ENCODE measurements at regions of chr19 and their contacts with region 1.

Region 1: DNA sequence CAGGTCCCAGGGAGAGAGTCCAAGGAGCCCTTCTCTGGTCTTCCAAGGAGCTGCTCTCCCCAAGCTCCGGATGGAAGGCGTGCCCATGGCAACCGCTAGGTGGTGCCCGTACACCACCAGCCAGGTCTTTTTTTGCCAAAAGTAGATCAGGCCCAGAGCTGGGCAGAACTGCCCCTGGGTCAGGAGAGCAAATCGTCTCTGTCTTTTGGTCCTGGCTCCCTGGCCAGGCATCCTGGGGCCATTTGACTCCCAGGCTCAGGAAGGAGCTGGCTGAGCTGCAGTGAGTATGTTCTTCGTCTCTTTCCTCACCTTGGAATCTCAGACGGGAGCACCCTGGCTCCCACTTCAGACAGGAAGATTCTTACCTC is 24.6 kb upstream of the BCL3 start:
- DNase-seq: peak; percentile 62 to 93
- H3K4me3 ChIP-seq: no peak overlapping the region
- H3K27ac ChIP-seq: no peak overlapping the region
- H3K4me1 ChIP-seq: peaks cover 0 to 6% (median 4%) of the 10 kb centered on the region in 4 experiments; a peak in 5 of 7 replicates
- H3K27me3 ChIP-seq: no peaks in the 10 kb centered on the region; a peak in 1 of 7 replicates
- CTCF ChIP-seq: peak; percentile 96 to 98 (median 97)
- EP300 ChIP-seq: no peak
- POLR2A ChIP-seq: no peak
- RAD21 ChIP-seq: peak; percentile 97 to 99

Region 2: GRCh38 chr19:44653977-44654774 is 69.8 kb before region 1 on chr19:
- CTCF ChIA-PET with region 1: interaction called, 14 read pairs
- POLR2A ChIA-PET with region 1: no interaction called
- DNase-seq: peak in 1 of 2 experiments; percentile 83
- H3K4me3 ChIP-seq: no peak overlapping the region
- H3K27ac ChIP-seq: no peak overlapping the region
- H3K4me1 ChIP-seq: peaks cover 0 to 2% (median 0%) of the 10 kb centered on the region in 4 experiments; a peak in 2 of 7 replicates
- H3K27me3 ChIP-seq: no peaks in the 10 kb centered on the region
- CTCF ChIP-seq: peak; percentile 71 to 82 (median 75)
- EP300 ChIP-seq: no peak
- POLR2A ChIP-seq: no peak
- RAD21 ChIP-seq: peak; percentile 69 to 77

Region 3: DNA sequence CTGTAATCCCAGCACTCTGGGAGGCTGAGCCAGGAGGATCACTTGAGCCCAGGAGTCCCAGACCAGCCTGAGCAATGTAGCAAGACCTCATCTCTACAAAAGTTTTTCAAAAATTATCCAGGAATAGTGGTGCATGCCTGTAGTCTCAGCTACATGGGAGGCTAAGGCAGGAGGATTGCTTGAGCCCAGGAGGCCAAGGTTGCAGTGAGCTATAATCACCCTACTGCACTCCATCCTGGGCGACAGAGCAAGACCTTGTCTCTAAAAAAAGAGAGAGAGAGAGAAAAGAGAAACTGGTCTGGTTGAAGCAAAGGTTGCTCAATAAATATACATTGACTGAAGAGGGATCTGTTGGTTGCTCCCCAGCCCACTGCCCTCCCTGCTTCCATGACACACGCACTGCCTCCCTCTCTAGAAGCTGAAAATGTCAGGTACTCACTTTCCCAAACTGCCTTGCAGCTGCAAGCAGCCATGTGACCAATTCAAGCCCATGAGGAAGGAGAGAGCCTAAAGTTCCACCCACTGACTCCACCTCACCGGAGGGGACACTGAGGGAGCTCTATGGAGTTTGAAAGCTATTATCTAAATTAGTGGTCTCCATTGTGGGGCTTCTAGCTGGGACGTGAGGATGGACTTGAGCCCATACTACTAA is 10.9 kb before region 1 on chr19:
- CTCF ChIA-PET with region 1: interaction called, 24 read pairs
- POLR2A ChIA-PET with region 1: interaction called, 5 read pairs
- DNase-seq: no peak
- H3K4me3 ChIP-seq: no peak overlapping the region
- H3K27ac ChIP-seq: no peak overlapping the region
- H3K4me1 ChIP-seq: no peaks in the 10 kb centered on the region
- H3K27me3 ChIP-seq: no peaks in the 10 kb centered on the region
- CTCF ChIP-seq: no peak
- EP300 ChIP-seq: no peak
- POLR2A ChIP-seq: no peak
- RAD21 ChIP-seq: no peak

Region 4: DNA sequence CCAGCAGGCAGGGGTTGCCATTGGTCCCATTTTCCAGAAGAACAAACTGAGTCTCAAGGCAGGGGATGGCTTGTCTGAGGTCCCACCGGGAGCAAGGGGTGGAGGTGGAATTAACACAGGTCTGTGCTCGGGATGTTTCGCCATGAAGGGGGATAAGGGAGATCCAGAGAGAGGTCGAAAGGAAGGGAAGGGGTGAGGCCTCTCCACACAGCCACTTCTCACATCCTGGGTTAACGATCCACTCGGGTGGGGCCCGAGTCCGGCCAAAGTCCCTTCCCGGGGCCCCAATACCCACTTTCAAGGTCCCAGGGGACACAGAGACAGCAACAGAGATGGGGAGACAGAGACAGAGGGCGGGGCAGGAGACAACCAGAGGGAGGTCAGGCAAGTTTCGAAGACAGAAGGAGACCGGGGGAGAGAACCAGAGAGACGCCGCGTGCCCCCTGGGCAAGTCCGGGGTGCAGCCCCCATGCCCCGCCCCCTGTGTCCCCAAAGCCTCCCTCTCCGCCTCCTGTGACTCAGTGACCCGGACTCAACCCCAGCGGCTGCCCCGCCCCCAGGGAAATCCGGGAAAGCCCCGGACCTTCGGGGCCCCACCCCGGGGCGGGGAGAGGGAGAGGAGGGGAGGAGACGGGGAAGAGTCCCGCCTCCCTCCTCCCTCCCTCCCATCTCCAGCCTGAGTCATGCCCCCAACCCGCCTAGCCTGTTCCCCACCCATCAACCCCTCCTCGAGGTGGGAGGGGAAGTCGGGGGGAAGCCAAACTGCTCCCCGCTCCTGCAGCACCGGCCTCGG is 23.2 kb after region 1 on chr19:
- CTCF ChIA-PET with region 1: interaction called, 91 read pairs
- POLR2A ChIA-PET with region 1: interaction called, 4 read pairs
- DNase-seq: peak in 1 of 2 experiments; percentile 92
- H3K4me3 ChIP-seq: peak overlapping the region; percentile 43 to 65 (median 52)
- H3K27ac ChIP-seq: no peak overlapping the region
- H3K4me1 ChIP-seq: peaks cover 0 to 3% (median 1%) of the 10 kb centered on the region in 4 experiments; a peak in 2 of 7 replicates
- H3K27me3 ChIP-seq: peaks cover 22 to 61% (median 46%) of the 10 kb centered on the region in 4 experiments
- CTCF ChIP-seq: no peak
- EP300 ChIP-seq: 0 out of 3 replicates have a peak, but pooled peaks of 1 of the 2 experiments have one; percentile 48
- POLR2A ChIP-seq: no peak
- RAD21 ChIP-seq: no peak

Region 5: DNA sequence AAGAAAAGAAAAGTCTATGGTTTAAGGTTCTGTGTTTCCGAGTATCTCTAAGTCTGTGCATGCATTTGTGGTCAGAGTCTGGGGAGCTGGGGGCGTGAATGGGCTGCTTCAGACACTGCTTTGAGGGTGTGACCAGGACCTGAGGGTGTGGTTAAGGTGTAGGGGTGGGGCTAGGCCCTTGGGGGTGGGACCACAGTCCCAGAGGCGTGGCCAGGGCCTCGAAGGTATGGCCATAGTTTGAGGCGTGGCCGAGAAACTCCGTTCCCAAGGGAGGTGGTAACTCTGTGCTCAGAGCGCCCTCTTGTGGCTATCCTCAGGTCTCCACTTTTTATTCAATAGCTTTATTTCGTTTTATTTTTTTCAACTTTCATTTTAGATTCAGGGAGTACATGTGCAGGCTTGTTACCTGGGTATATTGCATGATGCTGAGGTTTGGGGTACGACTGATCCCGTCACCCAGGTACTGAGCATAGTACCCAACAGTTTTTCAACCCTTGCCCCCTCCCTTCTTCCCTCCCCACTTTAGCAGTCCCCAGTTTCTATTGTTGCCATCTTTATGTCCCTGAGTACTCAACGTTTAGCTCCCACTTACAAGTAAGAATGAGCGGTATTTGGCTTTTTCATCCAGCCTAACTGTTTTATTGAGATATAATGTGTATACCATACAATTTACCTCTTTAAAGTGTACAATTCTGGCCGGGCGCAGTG is 46.8 kb after region 1 on chr19:
- CTCF ChIA-PET with region 1: interaction called, 468 read pairs
- POLR2A ChIA-PET with region 1: interaction called, 8 read pairs
- DNase-seq: peak; percentile 90 to 99
- H3K4me3 ChIP-seq: no peak overlapping the region
- H3K27ac ChIP-seq: no peak overlapping the region
- H3K4me1 ChIP-seq: peaks cover 0 to 2% (median under 1%) of the 10 kb centered on the region in 4 experiments; a peak in 2 of 7 replicates
- H3K27me3 ChIP-seq: no peaks in the 10 kb centered on the region; a peak in 2 of 7 replicates
- CTCF ChIP-seq: peak; percentile 56 to 85 (median 76)
- EP300 ChIP-seq: no peak
- POLR2A ChIP-seq: no peak
- RAD21 ChIP-seq: peak; percentile 93 to 96

Region 6: GRCh38 chr19:44800461-44800860 is 76.5 kb after region 1 on chr19:
- CTCF ChIA-PET with region 1: interaction called, 14 read pairs
- POLR2A ChIA-PET with region 1: interaction called, 3 read pairs
- DNase-seq: peak; percentile 91 to 99
- H3K4me3 ChIP-seq: no peak overlapping the region
- H3K27ac ChIP-seq: no peak overlapping the region
- H3K4me1 ChIP-seq: peaks cover 5 to 10% (median 6%) of the 10 kb centered on the region in 4 experiments; a peak in 6 of 7 replicates
- H3K27me3 ChIP-seq: peaks cover 0 to 19% (median 17%) of the 10 kb centered on the region in 4 experiments; a peak in 6 of 7 replicates
- CTCF ChIP-seq: peak; percentile 96 to 99 (median 99)
- EP300 ChIP-seq: no peak
- POLR2A ChIP-seq: no peak
- RAD21 ChIP-seq: peak; percentile 76 to 78